Calu3 (cell line): ENCODE measurements at regions of chr11 and their contacts with region 1.

Region 1: GRCh38 chr11:64251016-64251752 is at the start of gene PLCB3:
- DNase-seq: peak; percentile 52
- H3K4me3 Mint-ChIP-seq: peak within 1 kb of the TSS; percentile 90
- H3K27ac Mint-ChIP-seq: peak within 1 kb of the TSS; percentile 74
- H3K4me1 Mint-ChIP-seq: peaks cover 11% of the 10 kb centered on the region
- H3K27me3 Mint-ChIP-seq: no peaks in the 10 kb centered on the region
- CTCF ChIP-seq: peak; percentile 91
- total RNA-seq, gene PLCB3: 35.9 and 39.5 TPM in 2 replicates

Region 2: DNA sequence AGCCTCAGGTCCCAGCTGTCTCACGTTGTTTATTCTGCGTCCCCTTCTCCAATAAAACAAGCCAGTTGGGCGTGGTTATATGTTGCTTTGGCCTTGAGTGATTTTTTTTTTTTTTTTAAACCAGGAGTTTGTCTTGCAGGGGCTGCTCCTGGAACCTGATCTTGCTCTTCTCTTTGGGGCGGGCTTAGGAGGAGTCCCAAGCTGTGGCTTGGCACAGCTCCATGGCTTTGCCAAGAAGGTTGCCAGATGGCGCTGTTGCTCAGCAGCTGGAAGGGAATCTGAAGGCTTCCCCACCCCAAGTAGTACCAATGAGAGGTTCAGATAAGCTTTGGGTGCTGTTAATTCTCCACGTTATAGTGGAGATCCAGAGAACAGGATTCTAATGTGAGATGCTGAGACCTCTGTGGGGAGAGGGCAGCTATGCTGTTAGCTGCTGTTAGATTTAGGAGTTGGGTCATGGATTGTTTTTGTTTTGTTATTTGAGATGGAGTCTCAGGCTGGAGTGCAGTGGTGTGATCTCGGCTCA is 46.7 kb before region 1 on chr11:
- CTCF ChIA-PET with region 1: interaction called, 16 read pairs
- intact Hi-C with region 1: no loop called
- DNase-seq: peak; percentile 78
- H3K4me3 Mint-ChIP-seq: no peak overlapping the region
- H3K27ac Mint-ChIP-seq: peak overlapping the region; percentile 31
- H3K4me1 Mint-ChIP-seq: peaks cover 9% of the 10 kb centered on the region
- H3K27me3 Mint-ChIP-seq: no peaks in the 10 kb centered on the region
- CTCF ChIP-seq: peak; percentile 12

Region 3: GRCh38 chr11:64269380-64270234 is 18.4 kb after region 1 on chr11:
- CTCF ChIA-PET with region 1: interaction called, 13 read pairs
- intact Hi-C with region 1: no loop called
- DNase-seq: peak; percentile 97
- H3K4me3 Mint-ChIP-seq: peak overlapping the region; percentile 94
- H3K27ac Mint-ChIP-seq: peak overlapping the region; percentile 97
- H3K4me1 Mint-ChIP-seq: peaks cover 18% of the 10 kb centered on the region
- H3K27me3 Mint-ChIP-seq: no peaks in the 10 kb centered on the region
- CTCF ChIP-seq: no peak

Region 4: GRCh38 chr11:64294774-64295173 is 43.6 kb after region 1 on chr11:
- CTCF ChIA-PET with region 1: interaction called, 10 read pairs
- intact Hi-C with region 1: no loop called
- DNase-seq: no peak
- H3K4me3 Mint-ChIP-seq: no peak overlapping the region
- H3K27ac Mint-ChIP-seq: no peak overlapping the region
- H3K4me1 Mint-ChIP-seq: peaks cover 12% of the 10 kb centered on the region
- H3K27me3 Mint-ChIP-seq: peaks cover 94% of the 10 kb centered on the region
- CTCF ChIP-seq: no peak

Region 5: DNA sequence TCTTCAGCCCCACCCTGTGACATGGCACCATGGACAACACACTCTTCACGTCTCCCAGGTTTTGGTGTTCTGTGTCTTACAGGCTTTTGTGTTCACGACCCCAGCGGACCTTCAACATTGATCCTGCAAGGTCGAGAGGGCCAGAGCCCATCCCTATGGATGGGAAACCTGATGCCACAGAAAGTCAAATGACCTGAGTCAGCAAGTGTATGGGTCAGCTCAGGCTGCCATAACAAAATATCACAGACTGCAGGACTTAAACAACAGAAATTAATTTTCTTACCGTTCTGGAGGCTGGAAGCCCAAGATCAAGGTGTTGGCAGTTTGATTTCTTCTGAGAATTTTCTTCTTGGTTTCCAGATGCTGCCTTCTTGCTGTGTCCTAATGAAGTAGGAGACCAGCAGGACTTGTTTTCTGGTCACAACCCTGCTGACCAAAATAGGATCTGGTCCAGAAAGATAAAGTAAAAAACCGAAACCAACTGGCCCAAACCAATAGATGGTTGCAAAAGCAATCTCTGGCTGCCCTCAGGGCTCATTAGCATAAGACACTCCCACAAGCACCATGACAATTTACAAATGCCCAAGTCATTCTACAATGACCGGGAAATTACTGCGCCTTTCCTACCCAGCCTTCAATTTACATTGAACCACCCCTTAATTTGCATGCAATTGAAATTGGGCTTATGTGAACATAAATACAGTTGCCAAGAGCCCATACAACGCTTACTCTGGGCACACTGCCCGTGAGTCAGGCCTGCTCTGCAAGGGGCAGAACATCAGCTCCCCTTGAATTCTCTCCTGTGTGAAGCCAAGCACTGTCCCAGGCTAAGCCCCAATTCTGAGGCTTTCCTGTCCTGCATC is 221.6 kb after region 1 on chr11:
- CTCF ChIA-PET with region 1: no interaction called
- intact Hi-C with region 1: no loop called
- DNase-seq: no peak
- H3K4me3 Mint-ChIP-seq: no peak overlapping the region
- H3K27ac Mint-ChIP-seq: no peak overlapping the region
- H3K4me1 Mint-ChIP-seq: no peaks in the 10 kb centered on the region
- H3K27me3 Mint-ChIP-seq: peaks cover 100% of the 10 kb centered on the region
- CTCF ChIP-seq: no peak

Region 6: GRCh38 chr11:65083834-65084597 is 832.8 kb after region 1 on chr11 and contains the starts of genes CDCA5 and ZFPL1:
- CTCF ChIA-PET with region 1: no interaction called
- intact Hi-C with region 1: no loop called
- DNase-seq: peak; percentile 97
- H3K4me3 Mint-ChIP-seq: peak within 1 kb of the TSS; percentile 100
- H3K27ac Mint-ChIP-seq: peak within 1 kb of the TSS; percentile 97
- H3K4me1 Mint-ChIP-seq: peaks cover 32% of the 10 kb centered on the region
- H3K27me3 Mint-ChIP-seq: no peaks in the 10 kb centered on the region
- CTCF ChIP-seq: no peak
- total RNA-seq, gene CDCA5: 53.4 and 55.4 TPM in 2 replicates
- total RNA-seq, gene ZFPL1: 47.6 and 48.0 TPM in 2 replicates